MCF 10A (cell line): ENCODE measurements at regions of chr1 and their contacts with region 1.

Region 1: DNA sequence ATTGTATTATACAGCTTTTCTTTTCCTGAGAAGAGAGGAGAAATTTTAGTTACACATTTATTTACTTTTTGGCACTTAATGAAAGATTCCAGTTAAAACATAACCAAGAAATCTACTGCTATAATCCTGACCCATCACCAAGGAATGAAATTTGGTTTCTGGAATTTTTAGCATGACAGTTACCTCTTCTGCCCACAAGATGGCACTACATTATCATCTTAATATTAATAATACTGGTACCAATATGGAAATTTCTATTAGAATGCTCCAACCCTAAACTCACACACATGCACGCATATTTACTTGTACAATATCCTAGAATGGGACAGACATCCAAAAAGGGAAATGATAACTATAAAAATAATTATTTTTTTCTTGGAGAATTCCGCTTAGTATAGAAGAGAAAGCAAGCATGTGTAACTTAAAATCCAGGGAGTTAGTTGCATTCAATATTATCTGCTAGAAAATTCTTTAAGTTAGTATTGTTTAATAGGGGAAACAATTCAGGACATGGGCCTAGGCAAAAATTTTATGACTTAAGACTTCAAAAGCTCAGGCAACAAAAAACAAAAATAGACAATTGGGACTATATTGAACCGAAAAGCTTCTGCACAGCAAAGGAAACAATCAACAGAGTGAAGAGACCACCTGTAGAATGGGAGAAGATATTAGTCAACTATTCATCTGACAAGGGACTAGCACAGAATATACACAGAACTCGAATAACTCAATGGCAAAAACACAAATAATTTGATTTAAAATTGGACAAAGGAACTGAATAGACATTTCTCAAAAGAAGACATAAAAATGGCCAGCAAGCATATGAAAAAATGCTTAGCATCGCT is 37.4 kb downstream of the MAP3K21 start:
- DNase-seq: peak; percentile 56
- H3K4me3 Mint-ChIP-seq: no peak overlapping the region
- H3K27ac Mint-ChIP-seq: peak overlapping the region; percentile 54
- H3K4me1 Mint-ChIP-seq: peaks cover 17% of the 10 kb centered on the region
- H3K27me3 Mint-ChIP-seq: no peaks in the 10 kb centered on the region
- CTCF ChIP-seq: peak; percentile 72

Region 2: GRCh38 chr1:233326811-233327650 is 37.9 kb before region 1 on chr1:
- CTCF ChIA-PET with region 1: interaction called, 22 read pairs
- POLR2A ChIA-PET with region 1: interaction called, 10 read pairs
- intact Hi-C with region 1: no loop called
- DNase-seq: peak; percentile 100
- H3K4me3 Mint-ChIP-seq: peak overlapping the region; percentile 87
- H3K27ac Mint-ChIP-seq: peak overlapping the region; percentile 58
- H3K4me1 Mint-ChIP-seq: peaks cover 39% of the 10 kb centered on the region
- H3K27me3 Mint-ChIP-seq: no peaks in the 10 kb centered on the region
- CTCF ChIP-seq: no peak

Region 3: GRCh38 chr1:233341117-233341516 is 23.8 kb before region 1 on chr1:
- CTCF ChIA-PET with region 1: interaction called, 13 read pairs
- POLR2A ChIA-PET with region 1: interaction called, 3 read pairs
- intact Hi-C with region 1: no loop called
- DNase-seq: peak; percentile 50
- H3K4me3 Mint-ChIP-seq: no peak overlapping the region
- H3K27ac Mint-ChIP-seq: no peak overlapping the region
- H3K4me1 Mint-ChIP-seq: peaks cover 12% of the 10 kb centered on the region
- H3K27me3 Mint-ChIP-seq: no peaks in the 10 kb centered on the region
- CTCF ChIP-seq: no peak

Region 4: GRCh38 chr1:233376382-233377110 is 11.6 kb after region 1 on chr1:
- CTCF ChIA-PET with region 1: interaction called, 36 read pairs
- POLR2A ChIA-PET with region 1: interaction called, 8 read pairs
- intact Hi-C with region 1: no loop called
- DNase-seq: peak; percentile 33
- H3K4me3 Mint-ChIP-seq: no peak overlapping the region
- H3K27ac Mint-ChIP-seq: no peak overlapping the region
- H3K4me1 Mint-ChIP-seq: no peaks in the 10 kb centered on the region
- H3K27me3 Mint-ChIP-seq: no peaks in the 10 kb centered on the region
- CTCF ChIP-seq: peak; percentile 15

Region 5: GRCh38 chr1:233386336-233386735 is 21.4 kb after region 1 on chr1:
- CTCF ChIA-PET with region 1: interaction called, 43 read pairs
- POLR2A ChIA-PET with region 1: interaction called, 8 read pairs
- intact Hi-C with region 1: no loop called
- DNase-seq: peak; percentile 91
- H3K4me3 Mint-ChIP-seq: no peak overlapping the region
- H3K27ac Mint-ChIP-seq: no peak overlapping the region
- H3K4me1 Mint-ChIP-seq: peaks cover 6% of the 10 kb centered on the region
- H3K27me3 Mint-ChIP-seq: no peaks in the 10 kb centered on the region
- CTCF ChIP-seq: no peak

Region 6: GRCh38 chr1:233394860-233395717 is 30.2 kb after region 1 on chr1:
- CTCF ChIA-PET with region 1: interaction called, 19 read pairs
- POLR2A ChIA-PET with region 1: interaction called, 3 read pairs
- intact Hi-C with region 1: no loop called
- DNase-seq: peak; percentile 81
- H3K4me3 Mint-ChIP-seq: no peak overlapping the region
- H3K27ac Mint-ChIP-seq: no peak overlapping the region
- H3K4me1 Mint-ChIP-seq: no peaks in the 10 kb centered on the region
- H3K27me3 Mint-ChIP-seq: no peaks in the 10 kb centered on the region
- CTCF ChIP-seq: peak; percentile 98

Region 7: GRCh38 chr1:234065794-234066447 is 701.0 kb after region 1 on chr1:
- CTCF ChIA-PET with region 1: interaction called, 19 read pairs
- POLR2A ChIA-PET with region 1: no interaction called
- intact Hi-C with region 1: loop called (anchors 1 kb)
- DNase-seq: peak; percentile 89
- H3K4me3 Mint-ChIP-seq: no peak overlapping the region
- H3K27ac Mint-ChIP-seq: no peak overlapping the region
- H3K4me1 Mint-ChIP-seq: peaks cover 5% of the 10 kb centered on the region
- H3K27me3 Mint-ChIP-seq: no peaks in the 10 kb centered on the region
- CTCF ChIP-seq: peak; percentile 98